ENCODE measurements at regions of chr2 and their contacts with region 1.

Region 1: GRCh38 chr2:212686285-212686895 is 147.8 kb upstream of the ERBB4 start:
- DNase-seq: peak; percentile 83
- H3K4me3 ChIP-seq: no peak overlapping the region
- H3K27ac ChIP-seq: peak overlapping the region; percentile 62
- H3K4me1 ChIP-seq: peaks cover 13% of the 10 kb centered on the region
- H3K27me3 ChIP-seq: no peaks in the 10 kb centered on the region
- CTCF ChIP-seq: peak; percentile 87

Region 2: DNA sequence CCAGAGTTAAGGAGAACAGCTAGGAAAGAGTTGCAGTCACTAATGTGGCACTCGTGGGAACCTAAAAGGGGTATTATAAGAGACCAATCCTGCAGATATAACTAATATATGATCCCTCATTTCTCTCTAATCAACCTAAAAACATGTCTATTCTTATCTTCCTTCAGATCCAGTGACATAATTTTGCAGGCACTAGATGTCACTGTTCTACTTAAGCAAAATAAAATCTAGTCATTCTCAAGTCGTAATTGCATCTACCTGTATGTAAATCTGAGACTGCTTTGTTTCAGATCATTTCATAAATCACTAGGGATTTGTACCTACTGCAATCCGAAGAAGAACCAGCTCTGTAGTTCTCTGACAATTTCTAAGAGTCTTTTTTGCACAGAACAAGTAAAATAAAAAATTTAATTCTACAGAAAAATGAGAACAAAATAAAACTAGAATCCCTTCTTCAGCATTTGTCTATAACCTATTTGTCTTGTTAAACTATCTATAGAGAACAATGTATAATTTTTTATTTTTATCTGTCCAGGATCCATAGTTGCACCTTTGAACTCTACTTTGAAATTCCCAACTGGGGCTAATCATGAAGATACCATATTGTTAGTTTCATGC is 91.2 kb before region 1 on chr2:
- CTCF ChIA-PET with region 1: no interaction called
- POLR2A ChIA-PET with region 1: no interaction called
- intact Hi-C with region 1: loop called (anchors 5 kb)
- DNase-seq: peak; percentile 50
- H3K4me3 ChIP-seq: no peak overlapping the region
- H3K27ac ChIP-seq: no peak overlapping the region
- H3K4me1 ChIP-seq: peaks cover 9% of the 10 kb centered on the region
- H3K27me3 ChIP-seq: no peaks in the 10 kb centered on the region
- CTCF ChIP-seq: peak; percentile 68

Region 3: GRCh38 chr2:212733273-212733672 is 46.9 kb after region 1 on chr2:
- CTCF ChIA-PET with region 1: no interaction called
- POLR2A ChIA-PET with region 1: no interaction called
- intact Hi-C with region 1: no loop called
- DNase-seq: no peak
- H3K4me3 ChIP-seq: no peak overlapping the region
- H3K27ac ChIP-seq: no peak overlapping the region
- H3K4me1 ChIP-seq: no peaks in the 10 kb centered on the region
- H3K27me3 ChIP-seq: no peaks in the 10 kb centered on the region
- CTCF ChIP-seq: no peak

Region 4: GRCh38 chr2:212892193-212892592 is 205.8 kb after region 1 on chr2:
- CTCF ChIA-PET with region 1: interaction called, 3 read pairs
- POLR2A ChIA-PET with region 1: no interaction called
- intact Hi-C with region 1: loop called (anchors 2 kb)
- DNase-seq: peak; percentile 85
- H3K4me3 ChIP-seq: no peak overlapping the region
- H3K27ac ChIP-seq: no peak overlapping the region
- H3K4me1 ChIP-seq: peaks cover 26% of the 10 kb centered on the region
- H3K27me3 ChIP-seq: no peaks in the 10 kb centered on the region
- CTCF ChIP-seq: peak; percentile 68

Region 5: DNA sequence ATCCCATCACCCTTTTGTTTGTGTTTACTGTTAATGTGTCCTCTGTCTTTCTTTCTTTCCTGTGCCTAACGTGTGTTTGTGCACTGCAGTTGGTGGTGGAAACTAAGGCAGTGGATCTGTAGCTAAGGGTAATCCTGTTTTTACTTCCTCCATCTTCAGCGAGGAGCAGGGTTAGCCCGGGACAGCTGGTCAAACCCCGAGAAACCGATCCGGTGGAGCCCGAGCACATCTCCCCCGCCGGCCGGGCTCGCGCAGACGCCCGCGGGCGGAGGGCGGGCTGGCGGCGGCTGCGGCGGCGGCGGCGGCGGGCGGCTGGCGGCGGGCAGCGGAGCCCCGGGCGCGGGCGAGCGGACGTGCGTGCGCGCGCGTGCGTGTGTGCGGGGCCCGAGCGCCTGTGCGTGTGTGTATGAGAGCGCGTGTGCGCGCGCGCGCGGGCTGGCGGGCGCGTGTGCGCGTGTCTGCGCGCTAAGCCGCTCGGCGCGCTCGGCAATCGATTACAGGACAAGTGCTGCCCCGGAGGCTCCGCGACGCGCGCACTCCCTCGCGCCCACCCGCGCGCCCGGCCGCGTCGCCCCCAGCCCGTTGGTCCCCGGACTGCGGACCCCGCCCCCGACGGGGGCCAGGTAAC is 465.2 kb after region 1 on chr2 and contains the start of gene IKZF2:
- CTCF ChIA-PET with region 1: interaction called, 3 read pairs
- POLR2A ChIA-PET with region 1: no interaction called
- intact Hi-C with region 1: loop called (anchors 1 kb)
- DNase-seq: peak; percentile 96
- H3K4me3 ChIP-seq: peak within 1 kb of the TSS; percentile 75
- H3K27ac ChIP-seq: peak within 1 kb of the TSS; percentile 88
- H3K4me1 ChIP-seq: peaks cover 29% of the 10 kb centered on the region
- H3K27me3 ChIP-seq: no peaks in the 10 kb centered on the region
- CTCF ChIP-seq: no peak
- total RNA-seq, gene IKZF2: 68.6 and 69.5 TPM in 2 replicates

Region 6: DNA sequence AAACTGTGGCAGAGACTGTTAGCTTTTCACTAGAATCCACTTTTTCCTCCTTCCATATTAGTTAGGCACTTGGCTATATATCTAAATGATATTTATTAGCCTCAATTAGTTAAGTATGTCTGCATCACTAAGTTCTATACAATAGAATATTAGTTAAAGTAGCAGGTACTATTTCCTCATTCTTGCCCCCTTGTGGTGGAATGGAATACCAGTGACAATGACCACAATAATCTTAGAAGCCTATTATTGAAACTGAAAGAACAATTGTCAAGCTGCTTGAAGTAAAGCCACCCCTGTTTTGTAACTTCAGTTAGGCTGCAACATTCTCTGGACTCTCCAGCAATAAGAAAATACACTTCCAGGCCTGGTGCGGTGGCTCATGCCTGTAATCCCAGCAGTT is 1248.2 kb after region 1 on chr2:
- CTCF ChIA-PET with region 1: no interaction called
- POLR2A ChIA-PET with region 1: no interaction called
- intact Hi-C with region 1: loop called (anchors 10 kb)
- DNase-seq: peak; percentile 42
- H3K4me3 ChIP-seq: no peak overlapping the region
- H3K27ac ChIP-seq: no peak overlapping the region
- H3K4me1 ChIP-seq: no peaks in the 10 kb centered on the region
- H3K27me3 ChIP-seq: no peaks in the 10 kb centered on the region
- CTCF ChIP-seq: peak; percentile 63